Caco-2 (cell line): ENCODE measurements at regions of chr13 and their contacts with region 1.

Region 1: DNA sequence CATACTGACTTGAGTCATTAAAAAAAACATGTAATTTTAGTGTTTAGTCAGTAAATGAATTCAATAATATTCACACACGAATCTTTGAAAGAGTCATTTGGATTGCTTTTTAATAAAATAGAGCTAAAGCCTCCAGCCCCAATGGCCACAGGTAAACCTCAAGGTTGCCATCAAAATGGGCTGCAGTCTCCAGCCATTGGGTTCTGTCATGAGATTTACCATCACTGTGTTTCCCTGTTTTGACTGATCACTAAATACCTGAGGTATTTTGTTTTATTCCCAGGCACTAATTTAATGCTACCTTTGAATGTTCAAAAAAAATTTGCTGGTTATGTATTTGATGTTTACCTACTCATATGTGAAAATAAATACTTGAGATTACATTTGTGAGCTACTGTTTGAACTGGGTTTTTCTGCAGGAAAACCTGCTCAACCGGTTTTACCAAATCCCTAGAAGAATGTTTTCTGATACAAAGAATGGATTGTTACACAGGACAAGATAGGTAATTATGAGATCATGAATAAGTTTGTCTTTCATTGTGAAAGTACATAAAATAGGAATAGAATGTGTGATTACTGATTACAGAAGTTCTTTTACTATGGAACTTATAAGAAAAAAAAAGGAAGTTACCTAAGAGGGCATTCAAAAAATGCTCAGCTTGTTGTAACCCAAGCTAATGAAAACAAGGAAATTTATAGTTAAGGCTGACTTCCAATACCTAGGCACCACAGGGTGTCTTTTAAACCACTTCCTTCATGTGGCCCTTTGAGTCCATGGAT is 391.3 kb downstream of the EFNB2 start:
- DNase-seq: peak; percentile 77 to 86
- H3K4me3 ChIP-seq: no peak overlapping the region
- H3K4me3 Mint-ChIP-seq: peak overlapping the region; percentile 50
- H3K27ac Mint-ChIP-seq: peak overlapping the region; percentile 93
- H3K4me1 ChIP-seq: peaks cover 63% of the 10 kb centered on the region
- H3K4me1 Mint-ChIP-seq: peaks cover 56% of the 10 kb centered on the region
- H3K27me3 ChIP-seq: no peaks in the 10 kb centered on the region
- H3K27me3 Mint-ChIP-seq: no peaks in the 10 kb centered on the region
- CTCF ChIP-seq: no peak

Region 2: GRCh38 chr13:106078191-106078590 is 65.9 kb before region 1 on chr13:
- CTCF ChIA-PET with region 1: no interaction called
- POLR2A ChIA-PET with region 1: no interaction called
- intact Hi-C with region 1: loop called (anchors 1 kb)
- DNase-seq: peak; percentile 53 to 64
- H3K4me3 ChIP-seq: no peak overlapping the region
- H3K4me3 Mint-ChIP-seq: peak overlapping the region; percentile 58
- H3K27ac Mint-ChIP-seq: peak overlapping the region; percentile 84
- H3K4me1 ChIP-seq: peaks cover 30% of the 10 kb centered on the region
- H3K4me1 Mint-ChIP-seq: peaks cover 31% of the 10 kb centered on the region
- H3K27me3 ChIP-seq: no peaks in the 10 kb centered on the region
- H3K27me3 Mint-ChIP-seq: no peaks in the 10 kb centered on the region
- CTCF ChIP-seq: no peak

Region 3: GRCh38 chr13:106212386-106213010 is 68.4 kb after region 1 on chr13:
- CTCF ChIA-PET with region 1: no interaction called
- POLR2A ChIA-PET with region 1: no interaction called
- intact Hi-C with region 1: loop called (anchors 5 kb)
- DNase-seq: no peak
- H3K4me3 ChIP-seq: peak overlapping the region; percentile 58
- H3K4me3 Mint-ChIP-seq: peak overlapping the region; percentile 78
- H3K27ac Mint-ChIP-seq: peak overlapping the region; percentile 90
- H3K4me1 ChIP-seq: peaks cover 13% of the 10 kb centered on the region; the same call in 1 of the 2 replicates
- H3K4me1 Mint-ChIP-seq: peaks cover 6% of the 10 kb centered on the region
- H3K27me3 ChIP-seq: no peaks in the 10 kb centered on the region
- H3K27me3 Mint-ChIP-seq: no peaks in the 10 kb centered on the region
- CTCF ChIP-seq: no peak

Region 4: DNA sequence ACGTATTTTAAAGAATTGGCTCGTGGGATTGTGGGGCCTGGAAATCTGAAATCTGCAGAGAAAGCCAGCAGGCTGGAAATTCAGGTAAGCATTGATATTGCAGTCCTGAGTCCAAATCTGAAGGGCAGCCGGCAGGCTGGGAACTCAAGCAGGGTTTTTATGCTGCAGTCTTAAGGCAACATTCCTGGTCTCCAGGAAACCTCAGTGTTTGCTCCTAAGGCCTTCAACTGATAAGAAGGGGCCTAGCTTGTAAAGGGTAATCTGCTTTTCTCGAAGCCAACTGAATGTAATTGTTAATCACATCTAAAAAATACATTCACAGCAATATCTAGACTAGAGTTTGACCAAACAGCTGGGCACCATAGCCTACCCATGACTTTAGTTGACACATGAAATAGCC is 237.0 kb after region 1 on chr13:
- CTCF ChIA-PET with region 1: no interaction called
- POLR2A ChIA-PET with region 1: no interaction called
- intact Hi-C with region 1: loop called (anchors 2 kb)
- DNase-seq: peak; percentile 76 to 82
- H3K4me3 ChIP-seq: no peak overlapping the region
- H3K4me3 Mint-ChIP-seq: peak overlapping the region; percentile 26
- H3K27ac Mint-ChIP-seq: peak overlapping the region; percentile 47
- H3K4me1 ChIP-seq: peaks cover 37% of the 10 kb centered on the region
- H3K4me1 Mint-ChIP-seq: peaks cover 30% of the 10 kb centered on the region
- H3K27me3 ChIP-seq: no peaks in the 10 kb centered on the region
- H3K27me3 Mint-ChIP-seq: no peaks in the 10 kb centered on the region
- CTCF ChIP-seq: no peak